ENCODE measurements at regions of chr4 and their contacts with region 1.

Region 1: DNA sequence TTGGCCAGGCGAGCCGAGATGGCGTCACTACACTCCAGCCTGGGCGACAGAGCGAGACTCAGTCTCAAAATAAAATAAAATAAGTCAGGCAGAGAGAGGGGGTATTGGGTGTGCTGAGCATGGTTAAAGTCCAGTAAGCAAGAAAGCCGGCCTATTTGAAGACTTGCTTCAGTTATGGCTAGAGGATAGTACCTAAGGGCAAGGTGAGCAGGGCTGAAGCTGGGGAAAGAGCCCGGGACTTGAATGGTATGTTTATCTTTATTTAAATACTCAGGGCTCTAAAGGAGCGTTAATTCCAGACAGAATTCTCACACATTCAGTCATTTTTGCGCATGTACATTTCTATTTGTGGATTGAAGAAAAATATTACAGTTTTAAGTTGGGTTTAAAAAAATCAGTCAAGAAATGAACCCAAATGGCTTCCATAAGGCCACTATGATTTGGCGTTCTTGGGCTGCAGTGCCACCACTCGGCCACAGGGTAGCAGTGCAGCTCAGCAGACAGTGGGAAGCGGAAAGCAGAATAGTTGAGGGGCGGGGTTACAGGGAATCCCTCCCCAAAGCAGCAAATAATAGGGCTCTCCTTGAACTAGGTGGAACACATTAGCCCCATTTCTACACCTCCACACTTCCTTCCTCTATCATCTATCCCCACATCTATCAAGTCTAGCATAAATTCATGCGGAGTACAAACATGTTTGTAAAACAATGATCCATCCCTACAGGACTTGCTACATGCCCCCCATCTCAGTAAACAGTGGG is 37.2 kb upstream of the SH3D19 start:
- DNase-seq: peak; percentile 75
- H3K4me3 ChIP-seq: no peak overlapping the region
- H3K27ac ChIP-seq: no peak overlapping the region
- H3K4me1 ChIP-seq: no peaks in the 10 kb centered on the region
- H3K27me3 ChIP-seq: no peaks in the 10 kb centered on the region
- CTCF ChIP-seq: peak; percentile 99 to 100

Region 2: DNA sequence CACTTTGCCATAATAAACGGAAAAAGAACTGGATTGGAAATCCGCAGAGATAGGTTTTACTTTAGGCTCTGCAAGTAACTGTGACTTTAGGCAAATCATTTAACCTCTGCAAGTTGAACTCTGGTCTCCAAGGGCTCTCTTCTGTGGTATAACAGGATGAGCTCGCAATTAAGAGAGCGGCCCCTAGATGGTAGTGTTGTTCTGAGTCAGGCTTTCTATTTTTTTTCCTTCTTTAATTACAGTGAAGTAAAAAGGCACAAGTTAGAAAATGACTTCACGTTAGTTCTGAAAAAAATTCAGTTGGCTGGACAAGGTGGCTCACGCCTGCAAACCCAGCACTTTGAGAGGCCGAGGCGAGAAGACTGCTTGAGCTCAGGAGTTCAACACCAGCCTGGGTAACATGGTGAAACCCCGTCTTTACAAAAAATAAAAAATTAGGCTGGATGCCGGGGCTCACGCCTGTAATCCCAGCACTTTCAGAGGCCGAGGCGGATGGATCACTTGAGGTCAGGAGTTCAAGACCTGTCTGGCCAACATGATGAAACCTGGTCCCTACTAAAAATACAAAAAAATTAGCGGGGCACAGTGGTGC is 245.1 kb before region 1 on chr4:
- CTCF ChIA-PET with region 1: no interaction called
- dilution Hi-C with region 1: no loop called
- in situ Hi-C with region 1: no loop called
- intact Hi-C with region 1: loop called (anchors 1 kb)
- DNase-seq: peak; percentile 53
- H3K4me3 ChIP-seq: no peak overlapping the region
- H3K27ac ChIP-seq: no peak overlapping the region
- H3K4me1 ChIP-seq: no peaks in the 10 kb centered on the region
- H3K27me3 ChIP-seq: no peaks in the 10 kb centered on the region
- CTCF ChIP-seq: peak; percentile 69 to 78

Region 3: GRCh38 chr4:151238477-151238876 is 124.1 kb before region 1 on chr4:
- CTCF ChIA-PET with region 1: no interaction called
- dilution Hi-C with region 1: no loop called
- in situ Hi-C with region 1: no loop called
- intact Hi-C with region 1: loop called (anchors 1 kb)
- DNase-seq: no peak
- H3K4me3 ChIP-seq: no peak overlapping the region
- H3K27ac ChIP-seq: no peak overlapping the region
- H3K4me1 ChIP-seq: no peaks in the 10 kb centered on the region
- H3K27me3 ChIP-seq: no peaks in the 10 kb centered on the region
- CTCF ChIP-seq: no peak

Region 4: DNA sequence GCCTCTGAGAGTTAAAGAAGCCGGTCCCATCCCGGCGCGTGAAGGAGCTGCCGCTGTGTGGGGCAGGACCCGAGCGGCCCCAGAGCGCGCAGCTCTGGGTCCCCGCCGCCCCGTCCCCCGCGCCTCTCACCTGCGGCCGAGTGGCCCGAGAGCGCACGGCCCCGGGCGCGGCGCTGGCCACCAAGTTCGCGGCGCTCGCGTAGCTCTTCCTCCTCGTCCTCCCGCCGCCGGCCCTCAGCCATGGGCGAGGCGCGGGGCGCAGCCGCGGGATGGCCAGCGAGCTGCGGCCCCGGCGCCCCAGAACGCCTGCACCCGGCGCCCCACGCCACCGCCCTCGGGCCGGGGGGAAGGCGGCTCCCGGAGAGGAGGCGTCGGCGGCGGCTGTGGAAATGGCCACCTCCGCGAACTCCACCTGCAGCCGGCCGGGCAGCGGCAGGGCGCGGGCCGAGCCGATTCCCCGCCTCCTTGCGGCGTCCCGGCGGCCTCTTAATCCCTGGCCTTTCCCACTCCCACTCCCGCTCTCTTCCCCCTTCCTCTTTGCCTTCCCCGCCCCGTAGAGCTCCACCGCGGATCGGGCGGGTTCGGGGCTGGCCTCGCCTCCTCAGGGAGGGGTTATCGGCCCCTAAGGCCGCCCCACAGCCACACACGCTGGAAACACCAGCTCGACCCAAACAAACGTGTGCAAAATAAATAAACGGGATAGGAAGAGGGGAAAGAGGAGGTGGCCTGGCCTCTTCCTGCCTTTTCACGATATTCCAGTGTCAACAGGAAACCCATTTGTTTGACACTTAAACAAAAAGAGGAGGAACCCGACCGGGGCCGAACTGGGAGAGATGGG is 37.3 kb before region 1 on chr4 and contains the start of gene SH3D19:
- CTCF ChIA-PET with region 1: no interaction called
- dilution Hi-C with region 1: no loop called
- in situ Hi-C with region 1: no loop called
- intact Hi-C with region 1: loop called (anchors 1 kb)
- DNase-seq: peak; percentile 78
- H3K4me3 ChIP-seq: peak within 1 kb of the TSS; percentile 67 to 94 (median 74)
- H3K27ac ChIP-seq: peak within 1 kb of the TSS; percentile 87
- H3K4me1 ChIP-seq: peaks cover 19% of the 10 kb centered on the region
- H3K27me3 ChIP-seq: no peaks in the 10 kb centered on the region
- CTCF ChIP-seq: no peak
- total RNA-seq, gene SH3D19: 42.7 to 69.3 TPM

Region 5: GRCh38 chr4:151524610-151525009 is 162.0 kb after region 1 on chr4:
- CTCF ChIA-PET with region 1: no interaction called
- dilution Hi-C with region 1: no loop called
- in situ Hi-C with region 1: no loop called
- intact Hi-C with region 1: loop called (anchors 5 kb)
- DNase-seq: peak; percentile 81
- H3K4me3 ChIP-seq: no peak overlapping the region
- H3K27ac ChIP-seq: peak overlapping the region; percentile 64
- H3K4me1 ChIP-seq: peaks cover 18% of the 10 kb centered on the region
- H3K27me3 ChIP-seq: no peaks in the 10 kb centered on the region
- CTCF ChIP-seq: no peak

Region 6: GRCh38 chr4:151611960-151612359 is 249.4 kb after region 1 on chr4:
- CTCF ChIA-PET with region 1: no interaction called
- dilution Hi-C with region 1: no loop called
- in situ Hi-C with region 1: no loop called
- intact Hi-C with region 1: loop called (anchors 1 kb)
- DNase-seq: no peak
- H3K4me3 ChIP-seq: no peak overlapping the region
- H3K27ac ChIP-seq: no peak overlapping the region
- H3K4me1 ChIP-seq: no peaks in the 10 kb centered on the region
- H3K27me3 ChIP-seq: no peaks in the 10 kb centered on the region
- CTCF ChIP-seq: no peak

Measured in mammary epithelial cell (primary cell).